Naive thymus-derived CD4-positive, alpha-beta T cell (primary cell): ENCODE measurements at regions of chr14 and their contacts with region 1.

Region 1: DNA sequence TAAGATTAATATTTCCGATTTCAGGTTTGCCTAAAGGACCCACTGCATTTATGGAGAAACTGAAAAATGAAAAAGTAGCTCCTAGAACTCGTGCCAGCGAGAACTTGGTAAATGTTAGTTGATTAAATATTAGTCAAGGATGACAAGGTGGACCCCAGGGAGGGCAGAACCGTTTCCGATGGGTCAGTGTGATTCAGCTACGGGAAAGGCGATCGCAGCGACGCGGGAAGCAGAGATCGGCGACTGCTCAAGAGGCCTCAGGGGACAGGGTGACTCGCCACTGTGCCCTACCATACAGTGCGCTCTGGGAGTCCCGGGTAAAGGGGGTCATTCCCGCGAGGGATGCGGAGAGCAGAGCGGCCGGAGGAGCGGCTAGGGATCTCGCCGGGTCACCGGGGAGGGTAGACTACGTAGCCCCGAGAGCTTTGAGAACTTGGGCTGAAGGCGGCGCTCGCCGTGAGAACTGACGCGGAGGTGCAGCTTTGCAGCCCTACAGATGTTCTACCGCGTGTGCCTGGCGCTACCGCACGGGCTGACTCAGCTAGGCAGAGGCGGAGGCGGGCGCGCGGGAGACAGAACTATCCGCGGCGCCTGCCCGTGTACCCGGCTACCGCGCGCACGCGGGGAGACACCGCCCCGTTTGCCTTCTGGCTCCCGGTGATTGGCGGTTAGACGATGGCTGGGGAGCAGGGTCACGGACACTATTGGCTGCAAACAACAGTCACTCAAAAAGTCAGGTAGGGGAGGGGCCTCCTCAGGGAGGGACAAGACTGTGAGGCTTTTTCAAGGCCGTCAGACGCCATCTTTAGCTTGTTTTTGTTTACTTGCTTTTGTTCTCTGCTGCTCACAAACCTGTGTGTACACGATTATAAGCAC is 3.2 kb downstream of the C14orf93 start:
- DNase-seq: peak; percentile 88 to 99 (median 98)
- ATAC-seq: peak; percentile 97
- H3K4me3 ChIP-seq: peak overlapping the region; percentile 94
- H3K4me3 Mint-ChIP-seq: peak overlapping the region; percentile 91 to 100 (median 96)
- H3K27ac ChIP-seq: peak overlapping the region; percentile 86
- H3K27ac Mint-ChIP-seq: peak overlapping the region; percentile 87 to 99 (median 98)
- H3K4me1 ChIP-seq: peaks cover 9 to 25% of the 10 kb centered on the region in 2 donors
- H3K4me1 Mint-ChIP-seq: peaks cover 12 to 60% (median 48%) of the 10 kb centered on the region in 7 donors
- H3K27me3 ChIP-seq: no peaks in the 10 kb centered on the region
- H3K27me3 Mint-ChIP-seq: no peaks in the 10 kb centered on the region

Region 2: DNA sequence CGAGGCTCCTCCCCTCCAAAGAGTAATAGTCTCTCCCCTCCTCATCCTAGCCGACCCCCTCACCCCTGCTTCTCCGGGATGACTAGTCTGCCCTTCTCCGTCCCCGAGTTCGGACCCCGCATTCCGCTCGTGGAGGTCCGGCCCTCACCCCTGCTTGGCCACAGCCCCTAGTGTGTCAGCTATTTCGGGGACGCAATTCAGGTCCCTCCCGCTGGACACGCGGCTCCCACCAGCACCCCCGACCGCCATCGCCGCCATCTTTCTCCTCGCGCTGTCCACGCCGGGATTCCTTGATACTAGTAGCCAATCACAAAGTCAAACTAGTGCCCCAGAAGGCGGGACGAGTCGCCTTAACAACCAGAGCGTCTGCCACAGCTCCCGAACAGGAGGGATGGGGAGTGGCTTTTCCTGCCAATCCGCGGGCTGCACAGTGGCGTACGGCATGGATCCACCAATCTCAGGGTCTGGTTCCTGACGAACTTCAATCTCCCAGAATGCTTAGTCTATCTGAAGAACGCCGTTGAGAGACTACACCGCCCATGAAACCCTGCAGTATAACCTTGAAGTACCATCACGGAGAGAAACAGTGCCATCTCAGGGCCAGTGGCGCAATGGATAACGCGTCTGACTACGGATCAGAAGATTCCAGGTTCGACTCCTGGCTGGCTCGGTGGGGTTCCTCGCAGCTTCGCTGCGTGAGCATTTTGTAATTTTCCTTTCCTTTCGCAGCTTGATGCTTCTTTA is 77.5 kb before region 1 on chr14 and contains the start of gene PRMT5:
- CTCF ChIA-PET with region 1: interaction called, 4 read pairs
- POLR2A ChIA-PET with region 1: interaction called, 8 read pairs
- intact Hi-C with region 1: loop called (anchors 1 kb)
- DNase-seq: peak; percentile 81 to 100 (median 99)
- ATAC-seq: peak; percentile 97
- H3K4me3 ChIP-seq: peak within 1 kb of the TSS; percentile 91
- H3K4me3 Mint-ChIP-seq: no peak within 1 kb of the TSS
- H3K27ac ChIP-seq: peak within 1 kb of the TSS; percentile 91
- H3K27ac Mint-ChIP-seq: no peak within 1 kb of the TSS
- H3K4me1 ChIP-seq: peaks cover 9 to 17% of the 10 kb centered on the region in 2 donors
- H3K4me1 Mint-ChIP-seq: peaks cover 5 to 36% (median 20%) of the 10 kb centered on the region in 7 donors
- H3K27me3 ChIP-seq: no peaks in the 10 kb centered on the region
- H3K27me3 Mint-ChIP-seq: no peaks in the 10 kb centered on the region
- total RNA-seq, gene PRMT5: 24.9 to 82.8 (median 34.2) TPM

Region 3: DNA sequence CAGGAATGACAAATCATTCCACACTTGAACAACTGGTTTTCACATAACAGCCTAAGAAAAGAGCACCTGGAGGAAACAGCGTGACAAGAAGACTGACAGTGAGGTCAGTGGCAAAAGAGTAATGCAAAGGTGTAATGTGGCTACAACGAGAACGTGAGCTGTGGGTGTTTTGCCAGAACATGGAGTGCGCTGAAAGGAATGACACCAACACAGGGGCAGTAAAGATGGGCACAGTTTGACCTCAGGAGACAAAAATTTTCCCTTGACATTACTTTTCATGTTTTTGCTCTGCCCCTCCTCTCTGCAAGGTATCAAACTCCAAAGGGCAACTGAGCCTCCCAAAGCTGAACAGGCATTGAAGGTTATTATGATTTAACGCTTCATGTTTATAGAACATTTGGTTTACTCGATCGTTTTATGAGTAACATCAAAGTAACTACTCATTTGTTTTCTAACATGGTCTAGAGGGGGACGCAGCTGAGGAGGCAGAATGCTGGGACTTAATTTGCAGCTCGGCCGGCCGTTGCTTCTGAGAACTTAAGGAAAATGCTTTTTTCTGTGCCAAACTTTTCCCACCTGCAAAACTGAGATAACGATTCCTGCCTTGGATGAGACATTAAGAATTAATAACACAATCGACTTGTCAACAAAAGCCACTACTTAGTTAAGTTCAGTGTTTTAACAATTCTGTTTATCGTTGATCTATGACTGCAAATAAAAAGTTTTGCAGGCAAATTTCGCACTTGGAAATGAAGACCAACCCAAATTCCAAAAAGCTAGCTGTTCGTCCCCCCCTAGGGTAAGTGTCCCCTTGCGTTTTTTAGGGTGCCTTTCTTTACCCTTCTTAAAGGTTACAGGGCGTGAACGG is 50.8 kb before region 1 on chr14:
- CTCF ChIA-PET with region 1: interaction called, 4 read pairs
- POLR2A ChIA-PET with region 1: interaction called, 5 read pairs
- intact Hi-C with region 1: loop called in 1 of 2 experiments (anchors 2 kb)
- DNase-seq: no peak
- ATAC-seq: no peak
- H3K4me3 ChIP-seq: peak overlapping the region; percentile 64
- H3K4me3 Mint-ChIP-seq: peak overlapping the region; percentile 87 to 95 (median 93)
- H3K27ac ChIP-seq: peak overlapping the region; percentile 85
- H3K27ac Mint-ChIP-seq: peak overlapping the region; percentile 88 to 96 (median 92)
- H3K4me1 ChIP-seq: peaks cover 0 to 6% of the 10 kb centered on the region in 2 donors
- H3K4me1 Mint-ChIP-seq: peaks cover 0 to 31% (median 19%) of the 10 kb centered on the region in 7 donors
- H3K27me3 ChIP-seq: no peaks in the 10 kb centered on the region
- H3K27me3 Mint-ChIP-seq: peaks cover 0 to 4% (median 0%) of the 10 kb centered on the region in 5 donors

Region 4: GRCh38 chr14:22994762-22995275 is 12.0 kb before region 1 on chr14:
- CTCF ChIA-PET with region 1: interaction called, 33 read pairs
- POLR2A ChIA-PET with region 1: interaction called, 39 read pairs
- intact Hi-C with region 1: no loop called
- DNase-seq: peak in 5 of 9 donors; percentile 39 to 61 (median 53)
- ATAC-seq: peak; percentile 79
- H3K4me3 ChIP-seq: no peak overlapping the region
- H3K4me3 Mint-ChIP-seq: no peak overlapping the region
- H3K27ac ChIP-seq: no peak overlapping the region
- H3K27ac Mint-ChIP-seq: no peak overlapping the region
- H3K4me1 ChIP-seq: no peaks in the 10 kb centered on the region
- H3K4me1 Mint-ChIP-seq: peaks cover 0 to 5% (median 3%) of the 10 kb centered on the region in 7 donors
- H3K27me3 ChIP-seq: no peaks in the 10 kb centered on the region
- H3K27me3 Mint-ChIP-seq: no peaks in the 10 kb centered on the region

Region 5: DNA sequence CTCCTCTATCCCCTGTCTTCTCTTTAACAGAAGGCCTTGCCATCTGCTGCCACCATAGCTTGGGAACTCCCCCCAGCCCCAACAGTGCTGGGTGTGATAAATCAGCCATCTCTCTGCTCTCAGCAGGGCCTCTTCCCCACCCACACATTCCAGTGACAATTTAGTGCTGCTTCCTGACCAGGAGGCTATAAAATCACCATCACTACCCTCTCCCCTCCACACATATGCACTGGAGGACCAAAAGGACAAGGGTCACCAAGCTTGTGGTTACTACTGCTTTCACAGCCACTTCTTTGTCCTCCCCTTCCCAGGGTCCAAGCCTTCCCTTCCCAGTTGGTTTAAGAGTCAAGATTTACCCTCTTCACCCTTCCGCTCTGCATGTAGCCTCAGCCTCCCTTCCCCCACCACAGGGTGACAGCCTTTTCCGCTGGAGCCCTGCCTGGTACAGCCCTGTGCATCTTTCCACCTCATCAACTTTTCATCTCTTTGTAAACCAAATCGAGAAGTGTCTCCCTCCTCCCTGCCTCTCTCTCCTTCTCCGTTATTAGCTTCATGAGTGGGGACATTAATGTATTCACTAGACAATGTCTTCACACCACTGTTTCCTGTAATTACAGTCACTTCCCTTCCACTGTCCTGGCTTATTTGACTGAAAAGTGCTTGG is 18.5 kb after region 1 on chr14:
- CTCF ChIA-PET with region 1: interaction called, 11 read pairs
- POLR2A ChIA-PET with region 1: interaction called, 79 read pairs
- intact Hi-C with region 1: loop called in 1 of 2 experiments (anchors 1 kb)
- DNase-seq: no peak
- ATAC-seq: no peak
- H3K4me3 ChIP-seq: no peak overlapping the region
- H3K4me3 Mint-ChIP-seq: peak overlapping the region; percentile 4 to 78 (median 50)
- H3K27ac ChIP-seq: no peak overlapping the region
- H3K27ac Mint-ChIP-seq: peak overlapping the region; percentile 23 to 94 (median 86)
- H3K4me1 ChIP-seq: peaks cover 0 to 72% of the 10 kb centered on the region in 2 donors
- H3K4me1 Mint-ChIP-seq: peaks cover 49 to 83% (median 75%) of the 10 kb centered on the region in 7 donors
- H3K27me3 ChIP-seq: no peaks in the 10 kb centered on the region
- H3K27me3 Mint-ChIP-seq: no peaks in the 10 kb centered on the region

Region 6: GRCh38 chr14:23034483-23035302 is 27.9 kb after region 1 on chr14 and contains the start of gene PSMB5:
- CTCF ChIA-PET with region 1: interaction called, 5 read pairs
- POLR2A ChIA-PET with region 1: interaction called, 50 read pairs
- intact Hi-C with region 1: loop called (anchors 1 kb)
- DNase-seq: peak; percentile 63 to 94 (median 91)
- ATAC-seq: peak; percentile 95
- H3K4me3 ChIP-seq: peak within 1 kb of the TSS; percentile 79
- H3K4me3 Mint-ChIP-seq: peak within 1 kb of the TSS; percentile 87 to 96 (median 92)
- H3K27ac ChIP-seq: peak within 1 kb of the TSS; percentile 83
- H3K27ac Mint-ChIP-seq: peak within 1 kb of the TSS; percentile 93 to 99 (median 96)
- H3K4me1 ChIP-seq: peaks cover 9 to 17% of the 10 kb centered on the region in 2 donors
- H3K4me1 Mint-ChIP-seq: peaks cover 22 to 43% (median 29%) of the 10 kb centered on the region in 7 donors
- H3K27me3 ChIP-seq: no peaks in the 10 kb centered on the region
- H3K27me3 Mint-ChIP-seq: no peaks in the 10 kb centered on the region
- total RNA-seq, gene PSMB5: 19.2 to 69.1 (median 32.8) TPM

Region 7: GRCh38 chr14:23294734-23295561 is 288.2 kb after region 1 on chr14:
- CTCF ChIA-PET with region 1: no interaction called
- POLR2A ChIA-PET with region 1: no interaction called
- intact Hi-C with region 1: no loop called
- DNase-seq: peak; percentile 38 to 77 (median 66)
- ATAC-seq: peak; percentile 97
- H3K4me3 ChIP-seq: no peak overlapping the region
- H3K4me3 Mint-ChIP-seq: peak overlapping the region; percentile 3 to 87 (median 60)
- H3K27ac ChIP-seq: peak overlapping the region; percentile 51
- H3K27ac Mint-ChIP-seq: peak overlapping the region; percentile 35 to 96 (median 76)
- H3K4me1 ChIP-seq: peaks cover 0 to 11% of the 10 kb centered on the region in 2 donors
- H3K4me1 Mint-ChIP-seq: peaks cover 12 to 31% (median 28%) of the 10 kb centered on the region in 7 donors
- H3K27me3 ChIP-seq: no peaks in the 10 kb centered on the region
- H3K27me3 Mint-ChIP-seq: no peaks in the 10 kb centered on the region